GM23248 (cell line): ENCODE measurements at regions of chr2 and their contacts with region 1.

Region 1: DNA sequence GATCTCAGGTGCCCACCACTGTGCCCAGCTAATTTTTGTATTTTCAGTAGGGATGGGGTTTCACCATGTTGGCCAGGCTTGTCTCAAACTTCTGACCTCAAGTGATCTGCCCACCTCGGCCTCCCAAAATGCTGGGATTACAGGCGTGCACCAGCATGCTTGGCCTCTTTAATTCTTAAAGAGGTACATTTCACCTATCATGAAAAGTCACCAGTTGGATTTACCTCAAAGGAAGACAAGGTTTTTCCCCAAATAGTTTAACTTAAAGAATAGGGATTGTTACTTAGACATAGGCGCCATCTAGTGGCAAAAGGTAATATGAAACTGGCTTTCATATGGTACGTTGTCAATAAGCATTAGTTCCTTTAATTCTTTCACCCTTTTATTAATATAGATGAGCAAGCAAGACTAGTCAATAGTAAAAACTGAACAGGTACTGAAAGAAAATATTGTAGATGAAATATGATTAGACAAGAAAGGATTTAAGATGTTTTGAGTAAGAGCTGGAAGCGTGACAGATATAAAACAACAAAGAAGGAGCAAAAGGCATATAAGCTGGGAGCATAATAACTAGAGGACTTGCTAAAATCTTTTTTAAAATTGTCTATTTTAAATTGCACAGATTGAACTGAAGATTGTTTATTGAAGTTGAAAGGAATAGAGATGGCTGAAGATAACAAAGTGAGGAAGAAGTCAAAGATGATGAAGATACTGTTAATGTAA is 35.0 kb upstream of the PSMD14 start:
- DNase-seq: peak; percentile 63
- H3K4me3 ChIP-seq: no peak overlapping the region
- H3K27ac ChIP-seq: no peak overlapping the region
- H3K4me1 ChIP-seq: no peaks in the 10 kb centered on the region
- H3K27me3 ChIP-seq: no peaks in the 10 kb centered on the region

Region 2: GRCh38 chr2:161946489-161947107 is 673.4 kb after region 1 on chr2:
- in situ Hi-C with region 1: loop called (anchors 25 kb)
- DNase-seq: peak; percentile 58
- H3K4me3 ChIP-seq: no peak overlapping the region
- H3K27ac ChIP-seq: no peak overlapping the region
- H3K4me1 ChIP-seq: no peaks in the 10 kb centered on the region
- H3K27me3 ChIP-seq: peaks cover 11% of the 10 kb centered on the region; the same call in 1 of the 2 replicates